Motor neuron (in vitro differentiated cells): ENCODE measurements at regions of chr1 and their contacts with region 1.

Region 1: DNA sequence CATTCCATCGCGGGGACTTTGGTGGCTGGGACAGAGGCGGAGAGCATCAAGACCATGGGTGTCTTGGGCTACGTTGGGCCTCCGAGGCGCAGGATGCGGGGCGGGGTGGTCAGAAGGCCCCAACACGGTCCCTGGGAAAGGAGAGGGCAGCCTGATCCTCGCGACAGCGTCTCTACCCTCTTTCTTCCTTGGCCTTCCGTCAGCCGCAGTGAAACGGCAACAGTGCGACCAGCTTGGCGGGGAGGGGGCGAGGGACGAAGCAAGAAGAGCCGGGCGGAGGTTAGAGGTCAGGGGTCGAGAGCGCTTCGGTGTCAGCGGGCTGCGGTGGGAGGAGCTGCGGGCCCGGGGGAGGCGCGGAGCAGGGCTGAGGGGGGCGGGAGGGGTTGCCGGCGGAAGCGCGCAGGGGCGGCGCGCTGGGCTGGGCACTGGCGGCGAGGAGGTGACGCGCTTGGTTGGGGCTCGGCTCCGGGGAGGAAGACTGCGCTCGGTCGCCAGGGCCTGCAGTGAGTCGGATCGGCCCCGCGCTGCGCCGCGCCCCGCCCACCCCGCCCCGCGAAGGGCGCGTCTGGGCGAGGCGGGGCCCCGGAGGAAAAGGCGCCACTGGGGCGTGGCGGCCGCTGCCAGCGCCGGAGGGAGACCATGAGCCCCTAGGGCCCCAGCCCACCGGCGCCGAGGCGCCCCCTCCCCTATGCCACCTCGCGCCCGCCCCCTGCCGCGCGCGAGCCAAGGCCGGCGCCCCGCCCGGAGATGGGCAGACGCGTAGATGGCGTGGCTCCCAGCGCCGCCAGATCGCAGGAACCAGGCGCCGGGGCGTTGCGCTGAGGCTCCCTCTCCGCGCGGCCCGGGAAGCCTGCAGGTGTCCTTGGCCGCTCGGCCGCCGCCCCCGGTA is at the start of gene KCNC4:
- ATAC-seq: peak; percentile 78 to 84 (median 82)
- H3K4me3 ChIP-seq: peak within 1 kb of the TSS; percentile 43 to 68 (median 52)
- H3K27ac ChIP-seq: peak within 1 kb of the TSS; percentile 11 to 78
- H3K4me1 ChIP-seq: peaks cover 22 to 36% of the 10 kb centered on the region in 2 donors
- total RNA-seq, gene KCNC4: 0.56 to 8.1 (median 4.5) TPM

Region 2: GRCh38 chr1:110312188-110313121 is 102.5 kb after region 1 on chr1:
- in situ Hi-C with region 1: loop called in 8 of 9 experiments (anchors 5 to 25 kb)
- ATAC-seq: peak; percentile 88 to 100 (median 100)
- H3K4me3 ChIP-seq: no peak overlapping the region
- H3K27ac ChIP-seq: no peak overlapping the region
- H3K4me1 ChIP-seq: peaks cover 0 to 2% of the 10 kb centered on the region in 2 donors

Region 3: GRCh38 chr1:110455151-110455550 is 245.2 kb after region 1 on chr1:
- in situ Hi-C with region 1: loop called (anchors 10 to 25 kb)
- ATAC-seq: peak in 3 of 8 experiments; percentile 14 to 62 (median 62)
- H3K4me3 ChIP-seq: no peak overlapping the region
- H3K27ac ChIP-seq: no peak overlapping the region
- H3K4me1 ChIP-seq: no peaks in the 10 kb centered on the region

Region 4: DNA sequence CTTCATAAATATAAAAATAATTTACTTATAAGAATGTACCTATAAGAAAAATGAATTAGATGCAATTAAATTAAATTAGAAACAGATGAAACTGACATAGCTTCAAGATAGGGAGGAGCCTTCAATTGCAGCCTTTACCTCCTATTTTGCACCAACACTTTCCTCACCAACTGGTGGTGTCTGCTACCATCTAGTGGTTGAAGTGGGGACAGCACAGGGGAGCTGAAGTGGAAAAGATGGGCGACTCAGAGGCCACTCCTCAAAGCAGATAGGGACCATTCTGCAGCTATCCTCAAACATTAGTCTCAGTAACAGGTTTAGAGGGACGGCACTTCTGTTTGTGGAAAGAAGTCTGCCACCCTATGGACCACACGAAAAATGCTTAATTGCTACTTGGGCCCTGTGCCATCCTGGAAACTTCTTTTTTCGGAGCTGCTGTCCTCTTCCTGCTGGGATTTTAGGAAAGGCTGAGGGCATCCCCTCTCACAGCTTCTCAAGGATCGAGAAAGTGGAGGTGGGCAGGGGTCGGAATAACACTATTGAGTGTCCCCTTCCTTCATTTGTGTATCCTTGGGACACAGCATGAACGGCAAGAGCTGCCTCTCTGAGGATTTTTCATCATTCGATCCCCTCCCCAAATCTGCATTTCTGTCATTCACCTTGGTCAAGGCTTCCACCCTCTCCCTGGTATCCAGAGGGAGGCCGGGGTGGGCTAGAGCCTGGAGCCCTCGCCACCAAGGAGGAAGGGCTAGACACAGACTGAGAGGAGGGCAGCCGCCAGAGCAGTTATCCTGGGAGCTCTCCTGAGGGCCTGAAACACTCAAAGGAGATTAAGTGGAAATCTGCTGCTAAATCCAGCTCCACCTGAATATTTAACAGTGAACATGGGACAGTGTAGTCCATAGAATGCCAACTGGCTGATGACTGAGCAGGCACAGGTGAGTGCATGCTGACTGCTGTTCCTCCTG is 250.6 kb after region 1 on chr1:
- in situ Hi-C with region 1: loop called (anchors 10 to 25 kb)
- ATAC-seq: peak; percentile 89 to 96 (median 90)
- H3K4me3 ChIP-seq: no peak overlapping the region
- H3K27ac ChIP-seq: no peak overlapping the region
- H3K4me1 ChIP-seq: peaks cover 0 to 3% of the 10 kb centered on the region in 2 donors

Region 5: GRCh38 chr1:110495926-110496600 is 286.1 kb after region 1 on chr1:
- in situ Hi-C with region 1: loop called in 1 of 9 experiments (anchors 10 kb)
- ATAC-seq: peak; percentile 72 to 98 (median 78)
- H3K4me3 ChIP-seq: no peak overlapping the region
- H3K27ac ChIP-seq: no peak overlapping the region
- H3K4me1 ChIP-seq: peaks cover 23 to 28% of the 10 kb centered on the region in 2 donors